Activated CD4-positive, alpha-beta memory T cell treated with anti-CD3 and anti-CD28 coated beads for 36 hours (primary cell): ENCODE measurements at regions of chr17 and their contacts with region 1.

Region 1: GRCh38 chr17:69388822-69389442 is 25.6 kb upstream of the MAP2K6 start:
- DNase-seq: no peak
- H3K4me3 Mint-ChIP-seq: no peak overlapping the region
- H3K27ac Mint-ChIP-seq: no peak overlapping the region
- H3K4me1 Mint-ChIP-seq: no peaks in the 10 kb centered on the region
- H3K27me3 Mint-ChIP-seq: peaks cover 11% of the 10 kb centered on the region

Region 2: DNA sequence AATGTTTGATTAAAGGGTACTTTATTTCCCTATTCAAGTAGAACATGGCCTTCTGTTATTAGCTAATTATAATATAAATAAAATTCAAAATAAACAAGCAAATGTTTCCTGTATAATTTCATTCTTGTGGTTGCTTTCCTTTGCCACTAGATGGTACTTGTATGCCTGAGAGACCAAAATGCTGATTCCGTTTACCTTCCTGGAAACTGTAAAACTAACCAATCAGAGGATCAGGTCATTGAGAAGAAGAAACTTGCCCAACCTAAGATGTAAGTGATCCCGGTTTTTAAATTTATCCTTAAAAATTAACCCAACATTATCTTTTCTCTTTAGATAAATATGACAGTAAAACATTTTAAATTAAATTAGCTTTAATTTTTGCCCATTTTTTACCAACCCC is 53.9 kb before region 1 on chr17:
- CTCF ChIA-PET with region 1: interaction called, 14 read pairs
- POLR2A ChIA-PET with region 1: no interaction called
- intact Hi-C with region 1: no loop called
- DNase-seq: no peak
- H3K4me3 Mint-ChIP-seq: no peak overlapping the region
- H3K27ac Mint-ChIP-seq: no peak overlapping the region
- H3K4me1 Mint-ChIP-seq: peaks cover 3% of the 10 kb centered on the region
- H3K27me3 Mint-ChIP-seq: peaks cover 8% of the 10 kb centered on the region